ENCODE measurements at regions of chr6 and their contacts with region 1.

Region 1: GRCh38 chr6:111483736-111484632 is 966 bp upstream of the REV3L start:
- DNase-seq: peak; percentile 95

Region 2: GRCh38 chr6:111322153-111322552 is 161.8 kb before region 1 on chr6:
- intact Hi-C with region 1: no loop called
- DNase-seq: no peak

Region 3: GRCh38 chr6:111361648-111362047 is 122.3 kb before region 1 on chr6:
- intact Hi-C with region 1: loop called (anchors 5 kb)
- DNase-seq: no peak

Region 4: DNA sequence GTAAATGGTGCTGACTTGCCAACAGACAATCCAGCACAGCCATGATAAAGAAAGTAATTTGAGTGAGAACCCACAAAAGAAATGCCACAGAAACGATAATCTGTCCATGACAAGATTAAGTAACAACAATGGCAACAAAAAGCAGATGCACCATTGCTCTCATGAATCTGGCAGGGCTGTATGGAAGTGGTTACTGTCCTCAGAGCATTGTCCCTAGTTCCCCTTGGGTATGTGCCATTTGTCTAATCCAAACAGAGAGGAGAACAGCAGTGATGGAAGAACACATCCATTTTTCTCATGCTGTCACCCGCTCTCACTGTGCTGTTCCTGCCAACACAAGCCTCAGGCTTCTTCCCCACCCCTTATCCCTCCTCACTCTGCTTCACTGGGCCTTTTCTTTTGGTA is 66.8 kb before region 1 on chr6:
- intact Hi-C with region 1: no loop called
- DNase-seq: no peak

Region 5: DNA sequence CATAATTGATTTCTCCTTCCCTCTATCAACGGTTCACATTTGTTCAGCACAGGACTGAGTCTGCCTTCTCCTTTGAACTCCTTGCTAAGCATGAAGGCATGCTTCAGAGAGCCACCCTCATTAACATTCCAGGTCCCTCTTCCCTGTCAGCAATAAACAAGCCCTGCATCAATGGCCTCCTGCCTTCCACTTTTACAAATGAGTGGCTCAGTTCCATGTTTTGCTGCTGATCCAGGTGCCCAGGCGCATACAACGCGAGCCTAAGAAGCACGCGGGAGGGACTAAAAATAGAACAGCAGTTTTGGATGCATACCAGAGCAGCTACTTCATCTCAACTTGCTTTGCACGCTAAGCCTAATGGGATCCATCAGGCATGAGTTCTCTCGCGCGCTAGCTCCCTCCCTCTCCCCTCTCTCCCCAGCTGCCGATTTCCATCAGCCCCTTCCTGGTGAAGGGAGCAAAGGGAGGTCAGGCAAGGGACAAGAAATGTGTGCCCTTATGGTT is 68.3 kb after region 1 on chr6:
- intact Hi-C with region 1: loop called (anchors 5 kb)
- DNase-seq: no peak

Region 6: DNA sequence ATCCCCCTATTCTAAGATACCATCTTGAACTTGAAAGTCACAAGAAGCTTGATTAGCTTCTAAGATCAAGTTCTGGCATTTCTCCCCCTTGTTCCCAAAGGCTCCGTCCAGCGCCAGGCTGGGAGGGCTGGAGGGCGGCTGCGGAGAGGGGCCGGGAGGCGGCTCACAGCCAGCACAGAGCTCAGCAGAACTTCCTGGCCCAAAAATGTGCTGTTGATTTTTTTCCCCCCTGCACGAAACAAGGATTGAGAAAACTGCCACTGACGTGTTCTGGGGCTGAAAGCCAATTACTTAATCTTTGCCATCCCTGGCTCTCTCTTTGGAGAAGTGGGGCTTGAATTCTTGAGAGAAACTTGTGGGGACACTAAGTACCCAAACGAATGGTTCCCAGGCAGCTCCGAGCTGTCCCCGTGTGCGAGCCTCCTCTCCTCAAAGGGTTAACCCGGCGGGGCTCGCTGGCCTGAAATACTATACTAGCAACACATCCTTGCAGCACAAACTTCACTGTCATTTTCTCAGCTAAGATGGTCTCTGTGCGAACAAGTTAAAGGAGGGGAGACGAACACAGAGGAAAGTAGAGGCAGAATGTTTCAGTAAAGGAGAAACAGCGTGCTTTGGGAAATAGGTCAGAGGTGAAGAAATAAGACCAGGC is 121.2 kb after region 1 on chr6:
- intact Hi-C with region 1: loop called (anchors 1 kb)
- DNase-seq: peak; percentile 84

Region 7: GRCh38 chr6:111642463-111643158 is 158.6 kb after region 1 on chr6:
- intact Hi-C with region 1: loop called (anchors 5 kb)
- DNase-seq: peak; percentile 83